ENCODE measurements at regions of chr10 and their contacts with region 1.

Region 1: GRCh38 chr10:12264204-12264940 is 68.4 kb downstream of the CDC123 start:
- DNase-seq: peak; percentile 94
- H3K4me3 ChIP-seq: peak overlapping the region; percentile 42 to 64 (median 50)
- H3K27ac ChIP-seq: peak overlapping the region; percentile 70 to 79 (median 74)
- H3K4me1 ChIP-seq: peaks cover 13 to 27% (median 22%) of the 10 kb centered on the region in 4 donors
- H3K27me3 ChIP-seq: no peaks in the 10 kb centered on the region
- CTCF ChIP-seq: peak; percentile 86 to 91 (median 89)
- EP300 ChIP-seq: no peak
- POLR2A ChIP-seq: no peak

Region 2: GRCh38 chr10:12202226-12202625 is 62.1 kb before region 1 on chr10:
- intact Hi-C with region 1: no loop called
- DNase-seq: no peak
- H3K4me3 ChIP-seq: no peak overlapping the region
- H3K27ac ChIP-seq: no peak overlapping the region
- H3K4me1 ChIP-seq: peaks cover 3 to 20% (median 12%) of the 10 kb centered on the region in 4 donors
- H3K27me3 ChIP-seq: no peaks in the 10 kb centered on the region
- CTCF ChIP-seq: no peak
- EP300 ChIP-seq: no peak
- POLR2A ChIP-seq: no peak

Region 3: DNA sequence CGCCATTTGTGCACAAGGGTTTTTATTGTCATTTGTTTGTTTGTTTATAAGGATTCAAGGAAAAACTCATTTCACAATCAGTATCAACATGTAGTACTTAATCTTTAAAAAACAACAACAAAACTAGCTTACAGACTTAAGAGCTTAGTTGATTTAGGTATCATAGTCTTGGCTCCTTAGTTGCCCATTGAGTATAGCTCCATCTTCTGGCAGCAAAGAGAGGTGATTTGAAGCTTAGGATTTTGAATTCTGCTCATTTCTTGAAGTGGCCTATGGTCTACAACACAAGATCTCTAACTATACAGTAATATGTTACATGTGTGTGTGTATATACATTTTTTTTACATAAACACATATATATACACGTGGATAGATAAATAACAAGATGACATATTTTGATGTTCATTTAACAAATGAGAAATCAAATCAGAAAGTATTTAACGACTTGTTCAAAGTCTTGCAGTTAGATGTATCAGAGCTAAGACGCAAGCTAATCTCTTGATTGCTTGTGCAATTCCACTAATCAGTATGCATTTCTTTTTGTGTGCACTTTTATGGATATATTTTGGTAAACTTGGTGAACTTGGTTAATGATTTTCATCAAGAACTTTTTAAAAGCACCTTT is 392.3 kb after region 1 on chr10:
- intact Hi-C with region 1: loop called (anchors 5 kb)
- DNase-seq: no peak
- H3K4me3 ChIP-seq: no peak overlapping the region
- H3K27ac ChIP-seq: no peak overlapping the region
- H3K4me1 ChIP-seq: no peaks in the 10 kb centered on the region
- H3K27me3 ChIP-seq: no peaks in the 10 kb centered on the region
- CTCF ChIP-seq: peak; percentile 71 to 78 (median 75)
- EP300 ChIP-seq: no peak
- POLR2A ChIP-seq: no peak

Region 4: GRCh38 chr10:12710594-12711349 is 446.4 kb after region 1 on chr10:
- intact Hi-C with region 1: loop called (anchors 2 kb)
- DNase-seq: peak; percentile 96
- H3K4me3 ChIP-seq: no peak overlapping the region
- H3K27ac ChIP-seq: peak overlapping the region; percentile 80 to 85 (median 82)
- H3K4me1 ChIP-seq: peaks cover 37 to 59% (median 58%) of the 10 kb centered on the region in 4 donors
- H3K27me3 ChIP-seq: no peaks in the 10 kb centered on the region
- CTCF ChIP-seq: peak; percentile 92 to 97 (median 93)
- EP300 ChIP-seq: no peak
- POLR2A ChIP-seq: no peak

Region 5: DNA sequence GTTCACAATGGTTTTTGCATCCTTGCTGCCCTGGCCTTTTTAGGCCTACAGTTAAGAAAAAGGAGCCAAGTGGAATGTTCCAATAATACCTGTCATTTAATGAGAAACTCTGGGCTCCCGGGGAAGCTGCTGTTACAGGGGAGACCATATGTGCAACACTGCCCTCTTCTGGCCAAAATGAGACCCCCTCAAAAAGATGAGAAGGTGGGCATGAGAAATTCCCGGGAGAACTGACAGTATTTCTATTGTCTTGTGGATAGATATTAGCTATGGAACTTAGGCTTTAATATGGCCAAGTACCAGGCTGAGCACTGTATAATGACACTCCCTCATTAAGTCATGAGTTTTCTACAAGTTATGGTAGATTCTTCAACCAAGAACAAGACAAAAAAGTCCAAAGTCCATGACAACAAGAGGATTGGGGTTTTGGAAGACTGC is 637.8 kb after region 1 on chr10:
- intact Hi-C with region 1: loop called (anchors 5 kb)
- DNase-seq: no peak
- H3K4me3 ChIP-seq: no peak overlapping the region
- H3K27ac ChIP-seq: no peak overlapping the region
- H3K4me1 ChIP-seq: peaks cover 0 to 17% (median 11%) of the 10 kb centered on the region in 4 donors
- H3K27me3 ChIP-seq: no peaks in the 10 kb centered on the region
- CTCF ChIP-seq: peak; percentile 71 to 84 (median 79)
- EP300 ChIP-seq: no peak
- POLR2A ChIP-seq: no peak

Region 6: GRCh38 chr10:13099666-13100348 is 835.4 kb after region 1 on chr10 and contains the start of gene OPTN:
- intact Hi-C with region 1: loop called (anchors 10 kb)
- DNase-seq: peak; percentile 95
- H3K4me3 ChIP-seq: peak within 1 kb of the TSS; percentile 84 to 99 (median 96)
- H3K27ac ChIP-seq: peak within 1 kb of the TSS; percentile 93 to 99 (median 97)
- H3K4me1 ChIP-seq: peaks cover 26 to 41% (median 33%) of the 10 kb centered on the region in 4 donors
- H3K27me3 ChIP-seq: no peaks in the 10 kb centered on the region
- CTCF ChIP-seq: peak; percentile 68 to 83 (median 76)
- EP300 ChIP-seq: no peak
- POLR2A ChIP-seq: peak; percentile 51
- total RNA-seq, gene OPTN: 64.4 to 93.6 (median 79.6) TPM

Measured in esophagus muscularis mucosa (tissue), 4 donors.